Esophagus muscularis mucosa (tissue), 4 donors: ENCODE measurements at regions of chr3 and their contacts with region 1.

Region 1: DNA sequence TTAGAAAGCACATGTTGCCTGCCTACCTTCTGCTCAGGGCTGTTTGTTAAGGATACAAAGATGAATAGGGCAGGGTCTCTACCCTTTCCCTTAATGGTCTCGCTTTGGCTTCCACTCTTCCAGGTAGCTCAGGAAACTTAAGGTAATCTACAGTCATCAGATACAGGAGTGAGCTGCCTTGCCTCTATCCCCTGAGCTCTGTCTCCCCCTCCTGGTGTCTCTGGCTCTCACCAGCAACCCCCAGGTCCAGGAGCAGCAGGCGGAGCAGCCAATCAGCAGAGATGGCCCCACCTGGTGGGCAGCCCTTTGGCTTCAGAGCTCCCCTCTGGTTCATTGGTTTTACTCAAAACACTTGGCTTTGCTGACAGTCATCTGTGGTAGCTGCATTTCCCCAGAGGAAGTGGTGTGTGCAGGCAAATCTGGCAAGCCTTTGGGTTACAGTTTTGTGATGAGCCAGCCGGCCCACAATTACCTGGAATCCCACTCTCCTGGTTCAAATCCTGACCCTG is 8.5 kb upstream of the CX3CR1 start:
- DNase-seq: no peak
- H3K4me3 ChIP-seq: no peak overlapping the region
- H3K27ac ChIP-seq: no peak overlapping the region
- H3K4me1 ChIP-seq: peaks cover 0 to 17% (median 4%) of the 10 kb centered on the region in 4 donors
- H3K27me3 ChIP-seq: no peaks in the 10 kb centered on the region
- CTCF ChIP-seq: peak; percentile 82 to 91 (median 90)
- EP300 ChIP-seq: no peak
- POLR2A ChIP-seq: no peak

Region 2: GRCh38 chr3:39126532-39127071 is 161.8 kb before region 1 on chr3:
- intact Hi-C with region 1: loop called (anchors 5 kb)
- DNase-seq: no peak
- H3K4me3 ChIP-seq: no peak overlapping the region
- H3K27ac ChIP-seq: no peak overlapping the region
- H3K4me1 ChIP-seq: peaks cover 3 to 16% (median 11%) of the 10 kb centered on the region in 4 donors
- H3K27me3 ChIP-seq: no peaks in the 10 kb centered on the region
- CTCF ChIP-seq: peak; percentile 52 to 62 (median 62)
- EP300 ChIP-seq: no peak
- POLR2A ChIP-seq: no peak

Region 3: GRCh38 chr3:39189959-39190269 is 98.4 kb before region 1 on chr3:
- intact Hi-C with region 1: loop called (anchors 5 kb)
- DNase-seq: no peak
- H3K4me3 ChIP-seq: no peak overlapping the region
- H3K27ac ChIP-seq: peak overlapping the region in 2 of 4 donors; percentile 13 to 27
- H3K4me1 ChIP-seq: peaks cover 9 to 14% (median 11%) of the 10 kb centered on the region in 4 donors
- H3K27me3 ChIP-seq: no peaks in the 10 kb centered on the region
- CTCF ChIP-seq: peak; percentile 75 to 86 (median 78)
- EP300 ChIP-seq: no peak
- POLR2A ChIP-seq: no peak

Region 4: GRCh38 chr3:39208463-39209055 is 79.8 kb before region 1 on chr3:
- intact Hi-C with region 1: loop called (anchors 2 kb)
- DNase-seq: peak; percentile 91
- H3K4me3 ChIP-seq: no peak overlapping the region
- H3K27ac ChIP-seq: no peak overlapping the region
- H3K4me1 ChIP-seq: peaks cover 0 to 9% (median 2%) of the 10 kb centered on the region in 4 donors
- H3K27me3 ChIP-seq: no peaks in the 10 kb centered on the region
- CTCF ChIP-seq: peak; percentile 57 to 66 (median 64)
- EP300 ChIP-seq: no peak
- POLR2A ChIP-seq: no peak